OCI-LY7 (cell line): ENCODE measurements at regions of chr18 and their contacts with region 1.

Region 1: DNA sequence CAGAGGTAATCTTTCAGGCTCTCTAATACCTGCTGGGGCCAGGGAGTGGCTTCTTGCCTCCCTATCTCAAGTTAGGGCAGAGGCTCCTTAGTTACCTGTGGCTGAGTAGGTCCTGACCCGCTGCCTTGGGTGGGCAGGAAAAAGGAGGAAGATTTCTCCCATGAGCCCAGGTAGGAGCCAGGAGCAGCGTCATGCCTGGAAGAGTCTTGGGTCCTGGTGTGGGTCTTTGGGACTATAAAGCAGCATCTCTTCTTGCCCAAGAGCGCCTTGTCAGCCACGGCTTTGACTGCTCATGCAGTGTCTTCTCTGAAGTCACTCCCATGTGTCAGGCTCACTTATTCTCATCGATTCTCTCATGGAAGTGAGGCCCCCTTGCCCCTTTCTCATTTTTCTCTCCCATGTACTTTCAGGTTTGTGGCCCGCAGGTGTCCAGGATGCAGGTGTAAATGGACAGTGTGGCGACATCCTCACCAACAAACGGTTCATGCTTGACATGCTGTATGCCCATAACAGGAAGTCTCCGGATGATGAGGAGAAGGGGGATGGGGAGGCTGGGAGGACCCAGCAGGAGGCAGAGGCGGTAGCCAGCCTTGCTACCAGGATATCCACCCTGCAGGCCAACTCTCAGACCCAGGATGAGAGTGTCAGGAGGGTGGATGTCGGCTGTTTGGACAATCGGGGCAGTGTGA is 111.2 kb downstream of the TPGS2 start:
- DNase-seq: peak; percentile 13
- H3K4me3 ChIP-seq: no peak overlapping the region
- H3K27ac ChIP-seq: no peak overlapping the region
- H3K4me1 ChIP-seq: peaks cover 13% of the 10 kb centered on the region
- CTCF ChIP-seq: no peak

Region 2: GRCh38 chr18:36693931-36694620 is 23.5 kb before region 1 on chr18:
- CTCF ChIA-PET with region 1: no interaction called
- POLR2A ChIA-PET with region 1: interaction called, 3 read pairs
- intact Hi-C with region 1: loop called (anchors 2 kb)
- DNase-seq: no peak
- H3K4me3 ChIP-seq: no peak overlapping the region
- H3K27ac ChIP-seq: no peak overlapping the region
- H3K4me1 ChIP-seq: no peaks in the 10 kb centered on the region
- CTCF ChIP-seq: no peak

Region 3: DNA sequence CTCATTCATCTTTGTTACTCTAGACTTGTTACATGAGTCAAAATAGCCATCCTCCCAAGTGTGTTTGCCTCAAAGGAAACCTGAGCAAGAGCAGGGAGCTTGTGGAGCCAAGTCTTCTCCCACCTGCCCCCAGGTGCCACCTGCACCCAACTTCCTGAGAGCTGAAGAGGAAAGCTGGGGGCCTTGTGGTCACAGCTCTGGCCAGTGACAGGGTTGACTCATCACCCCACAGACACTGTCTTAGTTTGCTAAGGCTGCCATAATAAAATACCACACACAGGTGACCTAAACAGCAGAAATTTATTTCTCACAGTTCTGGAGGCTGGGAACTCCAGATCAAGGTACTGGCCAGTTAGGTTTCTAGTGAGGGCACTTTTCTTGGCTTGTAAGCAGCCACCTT is 11.6 kb after region 1 on chr18:
- CTCF ChIA-PET with region 1: interaction called, 4 read pairs
- POLR2A ChIA-PET with region 1: interaction called, 11 read pairs
- intact Hi-C with region 1: no loop called
- DNase-seq: no peak
- H3K4me3 ChIP-seq: no peak overlapping the region
- H3K27ac ChIP-seq: no peak overlapping the region
- H3K4me1 ChIP-seq: peaks cover 6% of the 10 kb centered on the region
- CTCF ChIP-seq: no peak

Region 4: GRCh38 chr18:36735130-36735529 is 17.6 kb after region 1 on chr18:
- CTCF ChIA-PET with region 1: interaction called, 4 read pairs
- POLR2A ChIA-PET with region 1: interaction called, 11 read pairs
- intact Hi-C with region 1: no loop called
- DNase-seq: peak; percentile 63
- H3K4me3 ChIP-seq: no peak overlapping the region
- H3K27ac ChIP-seq: peak overlapping the region; percentile 42
- H3K4me1 ChIP-seq: peaks cover 17% of the 10 kb centered on the region
- CTCF ChIP-seq: no peak